Activated CD8-positive, alpha-beta T cell treated with anti-CD3 and anti-CD28 coated beads for 36 hours (primary cell): ENCODE measurements at regions of chr5 and their contacts with region 1.

Region 1: DNA sequence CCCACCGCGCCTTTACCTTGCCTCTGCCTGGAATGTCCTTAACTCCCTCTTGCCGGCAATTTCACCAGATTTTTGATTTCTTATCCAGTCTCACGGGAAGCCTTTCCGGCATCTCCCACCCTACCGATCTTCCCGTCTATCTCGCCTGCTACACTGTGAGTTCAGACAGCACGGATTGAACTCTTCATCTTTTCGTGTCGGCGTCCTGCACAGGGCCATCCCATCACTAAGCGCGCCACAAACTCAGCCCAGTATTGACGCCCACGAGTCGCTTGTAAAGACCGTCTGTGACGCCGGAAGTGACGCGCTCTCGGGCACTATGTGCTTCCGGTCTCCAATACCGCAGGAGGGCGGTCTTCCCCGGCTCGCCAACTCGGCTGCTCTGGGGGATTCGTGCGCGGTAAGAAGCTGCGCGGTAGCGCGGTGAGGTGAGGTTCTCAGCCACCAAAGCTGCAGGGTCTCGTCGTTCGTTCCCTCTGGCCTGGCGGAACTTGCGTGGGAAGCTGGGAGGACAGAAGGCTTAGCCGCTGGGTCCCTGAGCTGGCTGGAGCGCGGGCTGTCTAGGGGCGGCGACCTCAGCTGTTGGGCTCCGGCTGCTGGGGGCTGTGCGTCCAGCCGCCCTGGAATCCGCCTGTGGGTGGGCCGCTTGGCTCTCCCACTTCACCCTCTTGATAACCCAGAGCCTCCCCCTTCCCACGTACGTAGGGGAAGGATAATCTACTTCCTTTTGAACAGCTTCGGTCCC is at the start of gene ZCCHC9:
- DNase-seq: peak; percentile 97
- ATAC-seq: peak; percentile 92
- H3K4me3 Mint-ChIP-seq: peak within 1 kb of the TSS; percentile 93
- H3K27ac Mint-ChIP-seq: peak within 1 kb of the TSS; percentile 99
- H3K4me1 Mint-ChIP-seq: peaks cover 54% of the 10 kb centered on the region
- H3K27me3 Mint-ChIP-seq: no peaks in the 10 kb centered on the region
- CTCF ChIP-seq: no peak
- total RNA-seq, gene ZCCHC9: 37.0 to 37.1 TPM

Region 2: DNA sequence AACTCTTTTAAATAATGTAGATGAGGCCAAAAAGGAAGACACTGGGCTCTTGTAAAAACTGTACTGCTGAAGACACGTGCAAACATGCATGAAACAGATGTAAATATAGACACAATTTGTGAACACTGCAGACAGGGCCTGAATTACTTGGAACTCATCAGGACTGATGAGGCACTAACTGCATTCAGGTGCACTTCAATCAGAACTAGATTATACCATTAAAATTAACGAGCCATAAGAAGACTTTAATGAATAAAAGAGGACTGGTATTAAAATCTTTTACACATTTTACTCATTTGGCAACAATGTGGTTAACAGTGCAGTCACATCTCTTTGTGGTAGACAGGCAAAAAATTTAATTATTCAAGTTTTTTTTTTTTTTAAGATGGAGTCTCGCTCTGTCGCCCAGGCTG is 13.4 kb before region 1 on chr5:
- CTCF ChIA-PET with region 1: interaction called, 15 read pairs
- POLR2A ChIA-PET with region 1: interaction called, 11 read pairs
- intact Hi-C with region 1: no loop called
- DNase-seq: no peak
- ATAC-seq: no peak
- H3K4me3 Mint-ChIP-seq: no peak overlapping the region
- H3K27ac Mint-ChIP-seq: no peak overlapping the region
- H3K4me1 Mint-ChIP-seq: peaks cover 56% of the 10 kb centered on the region
- H3K27me3 Mint-ChIP-seq: no peaks in the 10 kb centered on the region
- CTCF ChIP-seq: no peak

Region 3: GRCh38 chr5:81315336-81315735 is 13.9 kb after region 1 on chr5:
- CTCF ChIA-PET with region 1: interaction called, 7 read pairs
- POLR2A ChIA-PET with region 1: interaction called, 11 read pairs
- intact Hi-C with region 1: no loop called
- DNase-seq: no peak
- ATAC-seq: no peak
- H3K4me3 Mint-ChIP-seq: no peak overlapping the region
- H3K27ac Mint-ChIP-seq: no peak overlapping the region
- H3K4me1 Mint-ChIP-seq: no peaks in the 10 kb centered on the region
- H3K27me3 Mint-ChIP-seq: no peaks in the 10 kb centered on the region
- CTCF ChIP-seq: no peak